A549 (cell line): ENCODE measurements at regions of chr5 and their contacts with region 1.

Region 1: GRCh38 chr5:95781101-95781583 is 41.4 kb downstream of the GLRX start:
- DNase-seq: peak; percentile 73 to 85
- ATAC-seq: peak; percentile 100
- H3K4me3 ChIP-seq: no peak overlapping the region
- H3K27ac ChIP-seq: peak overlapping the region; percentile 50 to 65
- H3K4me1 ChIP-seq: peaks cover 7% of the 10 kb centered on the region; the same call in 2 of the 3 replicates
- CTCF ChIP-seq: peak; percentile 100
- EP300 ChIP-seq: no peak
- POLR2A ChIP-seq: no peak
- RAD21 ChIP-seq: peak; percentile 95 to 99

Region 2: DNA sequence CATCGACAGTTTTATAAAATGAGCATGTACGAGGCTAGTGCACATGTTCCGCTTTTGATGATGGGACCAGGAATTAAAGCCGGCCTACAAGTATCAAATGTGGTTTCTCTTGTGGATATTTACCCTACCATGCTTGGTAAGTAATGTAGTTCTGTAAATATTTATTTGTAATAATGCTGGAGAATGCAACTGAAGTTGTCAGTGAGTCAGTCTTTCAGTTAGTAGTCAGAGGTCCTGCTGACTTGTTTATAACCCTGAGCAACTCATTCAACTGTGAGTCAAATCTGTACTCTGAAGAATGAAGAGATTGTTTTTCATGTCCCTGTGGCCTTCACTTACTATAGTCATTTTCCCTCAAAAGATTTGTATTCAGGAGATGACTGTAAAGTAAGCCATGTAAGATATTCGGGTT is 189.6 kb before region 1 on chr5:
- CTCF ChIA-PET with region 1: no interaction called
- POLR2A ChIA-PET with region 1: no interaction called
- DNase-seq: peak in 1 of 2 experiments; percentile 9
- ATAC-seq: no peak
- H3K4me3 ChIP-seq: no peak overlapping the region
- H3K27ac ChIP-seq: no peak overlapping the region
- H3K4me1 ChIP-seq: no peaks in the 10 kb centered on the region
- CTCF ChIP-seq: no peak
- EP300 ChIP-seq: no peak
- POLR2A ChIP-seq: no peak
- RAD21 ChIP-seq: no peak

Region 3: DNA sequence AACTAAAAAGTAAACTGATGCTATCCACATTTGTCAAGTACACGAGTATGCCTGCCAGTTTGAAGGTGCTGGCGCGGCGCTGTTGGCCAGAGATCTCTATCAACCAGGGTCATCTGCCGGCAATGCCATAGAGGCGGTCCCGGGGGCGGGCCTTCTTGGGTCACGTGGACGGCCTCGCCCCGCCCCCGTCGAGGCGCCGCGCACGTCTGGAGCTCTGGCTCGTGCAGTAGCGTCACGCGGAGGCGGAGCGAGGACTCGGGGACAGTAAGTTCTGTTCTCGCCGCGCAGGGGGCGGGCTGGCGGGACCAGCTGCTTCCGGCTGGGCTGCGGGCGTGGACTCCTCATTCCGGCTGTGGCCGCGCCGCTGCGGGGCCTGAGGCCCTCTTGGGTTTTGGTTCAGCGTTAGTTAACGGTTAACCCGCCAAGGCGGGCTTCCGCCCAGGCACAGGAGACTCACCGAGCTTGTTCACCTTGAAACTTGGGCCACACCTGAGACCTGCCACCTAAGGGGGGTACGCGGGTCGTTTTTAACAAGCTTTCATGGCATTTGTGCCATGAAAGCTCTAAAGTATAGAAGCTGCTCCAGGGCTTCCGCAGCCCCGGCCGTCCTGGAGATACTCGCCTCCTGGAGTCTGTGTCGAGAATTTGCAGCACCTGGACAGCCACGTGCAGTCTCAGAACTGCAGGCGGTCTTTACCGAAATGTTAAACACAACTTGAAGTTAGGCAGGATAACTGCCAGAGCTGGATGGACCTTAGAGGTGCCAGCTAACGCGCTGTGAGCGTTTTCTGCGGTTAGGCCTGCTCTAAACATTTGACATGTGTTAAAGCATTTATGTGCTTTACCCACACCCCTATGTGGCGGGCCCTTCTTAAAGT is 134.3 kb before region 1 on chr5 and contains the start of gene RFESD:
- CTCF ChIA-PET with region 1: interaction called, 39 read pairs
- POLR2A ChIA-PET with region 1: interaction called, 8 read pairs
- DNase-seq: peak; percentile 83 to 99
- ATAC-seq: peak; percentile 98
- H3K4me3 ChIP-seq: peak within 1 kb of the TSS; percentile 47
- H3K27ac ChIP-seq: peak within 1 kb of the TSS; percentile 85 to 87
- H3K4me1 ChIP-seq: peaks cover 14% of the 10 kb centered on the region
- CTCF ChIP-seq: no peak; the same call in 2 of the 3 replicates
- EP300 ChIP-seq: no peak
- POLR2A ChIP-seq: peak; percentile 73
- RAD21 ChIP-seq: peak in 1 of 2 experiments; percentile 32; a peak in 1 of 5 replicates
- polyA plus RNA-seq, gene RFESD: 4.8 and 5.4 TPM in 2 replicates

Region 4: DNA sequence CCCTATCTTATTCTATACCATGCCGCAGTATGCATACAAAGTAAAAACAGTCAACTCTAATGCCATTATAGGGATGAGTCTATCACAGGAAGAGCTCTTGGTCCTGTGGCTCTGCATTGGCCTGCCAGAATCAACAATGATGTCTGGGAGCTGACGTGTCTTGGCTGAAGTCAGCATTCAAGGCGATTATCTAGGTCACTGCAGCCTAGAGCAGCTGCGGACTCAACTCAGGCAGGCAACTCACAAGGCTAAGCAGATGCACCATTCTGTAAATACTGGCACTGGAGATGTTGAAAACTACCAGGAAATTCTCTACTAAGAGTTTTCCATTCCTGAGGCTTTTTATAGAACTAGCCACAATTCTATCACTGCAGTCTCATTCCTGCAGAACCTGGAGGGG is 111.6 kb before region 1 on chr5:
- CTCF ChIA-PET with region 1: interaction called, 18 read pairs
- POLR2A ChIA-PET with region 1: no interaction called
- DNase-seq: no peak
- ATAC-seq: no peak
- H3K4me3 ChIP-seq: no peak overlapping the region
- H3K27ac ChIP-seq: no peak overlapping the region
- H3K4me1 ChIP-seq: peaks cover under 1% of the 10 kb centered on the region; the same call in 1 of the 3 replicates
- CTCF ChIP-seq: no peak
- EP300 ChIP-seq: no peak
- POLR2A ChIP-seq: no peak
- RAD21 ChIP-seq: no peak

Region 5: GRCh38 chr5:95794070-95794516 is 13.0 kb after region 1 on chr5:
- CTCF ChIA-PET with region 1: interaction called, 60 read pairs
- POLR2A ChIA-PET with region 1: no interaction called
- DNase-seq: peak; percentile 8 to 76
- ATAC-seq: peak; percentile 86 to 92
- H3K4me3 ChIP-seq: no peak overlapping the region
- H3K27ac ChIP-seq: peak overlapping the region; percentile 79 to 83
- H3K4me1 ChIP-seq: peaks cover 70% of the 10 kb centered on the region
- CTCF ChIP-seq: no peak
- EP300 ChIP-seq: peak; percentile 69 to 83; a peak in 4 of 5 replicates
- POLR2A ChIP-seq: no peak
- RAD21 ChIP-seq: no peak; a peak in 1 of 5 replicates

Region 6: GRCh38 chr5:95808686-95809413 is 27.7 kb after region 1 on chr5:
- CTCF ChIA-PET with region 1: interaction called, 44 read pairs
- POLR2A ChIA-PET with region 1: no interaction called
- DNase-seq: no peak
- ATAC-seq: no peak
- H3K4me3 ChIP-seq: no peak overlapping the region
- H3K27ac ChIP-seq: peak overlapping the region; percentile 70 to 75
- H3K4me1 ChIP-seq: peaks cover 67% of the 10 kb centered on the region
- CTCF ChIP-seq: no peak
- EP300 ChIP-seq: no peak
- POLR2A ChIP-seq: no peak
- RAD21 ChIP-seq: no peak

Region 7: DNA sequence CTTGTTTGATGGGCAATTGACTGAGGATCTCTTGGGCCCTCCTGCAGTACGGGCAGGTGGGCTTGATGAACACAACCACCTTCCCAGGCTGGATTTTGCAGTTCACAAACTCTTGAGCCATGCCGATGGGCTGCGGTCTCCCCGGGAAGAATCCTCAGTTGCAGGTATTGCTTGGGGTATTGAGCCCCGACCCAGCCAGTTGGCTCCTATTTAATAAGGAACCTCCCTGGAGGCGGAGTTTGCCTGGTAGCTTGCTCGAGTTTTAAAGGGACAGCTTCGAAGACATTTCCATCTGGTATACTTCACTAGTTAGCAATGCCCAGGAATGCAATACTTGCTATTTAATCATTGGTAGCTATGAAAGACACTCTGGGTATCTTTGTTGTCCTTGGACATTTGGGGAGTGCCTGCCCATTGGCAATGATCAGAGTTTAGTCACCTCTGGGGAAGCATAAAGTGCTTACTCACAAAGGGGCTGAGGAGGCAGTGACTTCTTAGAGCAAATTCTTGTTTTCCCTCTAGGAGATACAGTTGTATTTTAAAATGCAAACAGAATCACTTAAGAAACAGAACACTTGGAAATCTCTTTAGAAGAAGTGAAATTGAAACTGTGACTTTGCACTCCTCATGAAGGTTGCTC is 41.5 kb after region 1 on chr5 and contains the start of gene GLRX:
- CTCF ChIA-PET with region 1: interaction called, 20 read pairs
- POLR2A ChIA-PET with region 1: interaction called, 20 read pairs
- DNase-seq: peak; percentile 81 to 88
- ATAC-seq: peak; percentile 77 to 87
- H3K4me3 ChIP-seq: peak within 1 kb of the TSS; percentile 89
- H3K27ac ChIP-seq: peak within 1 kb of the TSS; percentile 87 to 94
- H3K4me1 ChIP-seq: peaks cover 55% of the 10 kb centered on the region
- CTCF ChIP-seq: no peak
- EP300 ChIP-seq: no peak
- POLR2A ChIP-seq: peak; percentile 78
- RAD21 ChIP-seq: no peak; a peak in 1 of 5 replicates
- polyA plus RNA-seq, gene GLRX: 329 and 381 TPM in 2 replicates

Region 8: DNA sequence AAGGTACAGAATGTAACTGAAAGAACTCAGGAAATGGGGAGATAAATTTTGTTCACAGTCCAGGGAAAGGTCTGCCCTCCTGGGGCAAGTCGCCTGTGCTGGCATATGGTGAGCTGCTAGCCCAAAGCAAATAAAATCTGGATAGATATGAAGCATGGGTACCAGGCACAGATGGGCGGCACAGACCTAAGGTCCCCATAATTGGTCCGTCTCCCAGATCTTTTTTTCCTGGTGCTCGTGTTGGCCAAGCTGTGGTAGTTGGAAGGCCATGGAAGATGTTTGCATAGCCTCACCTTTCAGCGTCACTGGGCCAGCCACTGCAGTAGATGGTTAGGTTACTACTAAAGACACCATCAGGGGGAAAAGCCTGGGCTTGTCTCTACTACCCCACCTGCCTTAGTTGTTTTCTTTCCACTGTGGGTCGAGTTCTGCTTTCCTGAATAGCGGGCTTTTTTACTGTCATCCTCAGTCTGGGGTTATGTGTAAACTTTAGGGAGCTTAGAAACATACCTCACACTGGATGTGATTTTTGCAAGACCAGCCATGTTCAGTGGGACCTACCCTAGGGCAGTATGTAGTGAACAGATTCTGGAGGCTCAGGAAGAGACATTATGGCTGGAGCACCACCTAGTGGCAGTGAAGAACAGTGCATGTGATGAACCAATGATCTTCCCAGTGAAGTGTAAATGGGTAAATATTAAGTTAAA is 65.6 kb after region 1 on chr5:
- CTCF ChIA-PET with region 1: interaction called, 469 read pairs
- POLR2A ChIA-PET with region 1: interaction called, 3 read pairs
- DNase-seq: peak; percentile 76 to 89
- ATAC-seq: peak; percentile 88 to 92
- H3K4me3 ChIP-seq: no peak overlapping the region
- H3K27ac ChIP-seq: peak overlapping the region; percentile 58 to 70
- H3K4me1 ChIP-seq: peaks cover 33% of the 10 kb centered on the region
- CTCF ChIP-seq: peak; percentile 98
- EP300 ChIP-seq: no peak
- POLR2A ChIP-seq: no peak
- RAD21 ChIP-seq: peak; percentile 97 to 98